Caco-2 (cell line): ENCODE measurements at regions of chr3 and their contacts with region 1.

Region 1: DNA sequence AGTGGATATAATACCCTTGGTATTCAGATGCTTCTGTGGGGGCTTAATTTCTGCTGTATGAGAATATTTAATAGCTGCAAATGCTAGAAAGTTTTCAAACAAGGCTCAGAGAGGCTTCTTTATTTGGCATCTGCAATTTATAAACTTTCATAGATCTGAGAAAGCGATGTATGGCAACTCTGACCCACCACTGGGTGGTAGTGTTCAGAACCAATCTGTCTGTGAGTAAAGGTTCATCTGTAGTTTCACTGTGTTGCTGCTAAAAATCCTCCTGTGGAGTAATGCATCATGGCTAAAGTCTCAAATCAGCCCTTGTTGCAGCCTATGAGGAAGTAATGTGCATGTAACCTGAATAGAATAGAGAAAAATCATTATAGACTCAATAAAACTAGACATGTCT is 47.4 kb downstream of the CLSTN2 start:
- DNase-seq: peak in 1 of 2 experiments; percentile 32
- H3K4me3 ChIP-seq: no peak overlapping the region
- H3K4me3 Mint-ChIP-seq: no peak overlapping the region
- H3K27ac Mint-ChIP-seq: no peak overlapping the region
- H3K4me1 ChIP-seq: no peaks in the 10 kb centered on the region
- H3K4me1 Mint-ChIP-seq: no peaks in the 10 kb centered on the region
- H3K27me3 ChIP-seq: no peaks in the 10 kb centered on the region
- H3K27me3 Mint-ChIP-seq: peaks cover 5% of the 10 kb centered on the region
- CTCF ChIP-seq: peak; percentile 29 to 65

Region 2: GRCh38 chr3:140051019-140051957 is 68.9 kb after region 1 on chr3:
- CTCF ChIA-PET with region 1: interaction called, 3 read pairs
- POLR2A ChIA-PET with region 1: no interaction called
- intact Hi-C with region 1: loop called (anchors 1 kb)
- DNase-seq: peak in 1 of 2 experiments; percentile 34
- H3K4me3 ChIP-seq: no peak overlapping the region
- H3K4me3 Mint-ChIP-seq: no peak overlapping the region
- H3K27ac Mint-ChIP-seq: peak overlapping the region; percentile 50
- H3K4me1 ChIP-seq: peaks cover 41% of the 10 kb centered on the region
- H3K4me1 Mint-ChIP-seq: peaks cover 34% of the 10 kb centered on the region
- H3K27me3 ChIP-seq: no peaks in the 10 kb centered on the region
- H3K27me3 Mint-ChIP-seq: no peaks in the 10 kb centered on the region
- CTCF ChIP-seq: peak in 1 of 2 experiments; percentile 54

Region 3: GRCh38 chr3:140078940-140079339 is 96.5 kb after region 1 on chr3:
- CTCF ChIA-PET with region 1: no interaction called
- POLR2A ChIA-PET with region 1: no interaction called
- intact Hi-C with region 1: no loop called
- DNase-seq: no peak
- H3K4me3 ChIP-seq: no peak overlapping the region
- H3K4me3 Mint-ChIP-seq: no peak overlapping the region
- H3K27ac Mint-ChIP-seq: no peak overlapping the region
- H3K4me1 ChIP-seq: no peaks in the 10 kb centered on the region
- H3K4me1 Mint-ChIP-seq: no peaks in the 10 kb centered on the region
- H3K27me3 ChIP-seq: no peaks in the 10 kb centered on the region
- H3K27me3 Mint-ChIP-seq: no peaks in the 10 kb centered on the region
- CTCF ChIP-seq: no peak

Region 4: GRCh38 chr3:140186421-140186920 is 204.1 kb after region 1 on chr3:
- CTCF ChIA-PET with region 1: no interaction called
- POLR2A ChIA-PET with region 1: no interaction called
- intact Hi-C with region 1: no loop called
- DNase-seq: no peak
- H3K4me3 ChIP-seq: no peak overlapping the region
- H3K4me3 Mint-ChIP-seq: no peak overlapping the region
- H3K27ac Mint-ChIP-seq: no peak overlapping the region
- H3K4me1 ChIP-seq: no peaks in the 10 kb centered on the region
- H3K4me1 Mint-ChIP-seq: no peaks in the 10 kb centered on the region
- H3K27me3 ChIP-seq: no peaks in the 10 kb centered on the region
- H3K27me3 Mint-ChIP-seq: no peaks in the 10 kb centered on the region
- CTCF ChIP-seq: no peak

Region 5: DNA sequence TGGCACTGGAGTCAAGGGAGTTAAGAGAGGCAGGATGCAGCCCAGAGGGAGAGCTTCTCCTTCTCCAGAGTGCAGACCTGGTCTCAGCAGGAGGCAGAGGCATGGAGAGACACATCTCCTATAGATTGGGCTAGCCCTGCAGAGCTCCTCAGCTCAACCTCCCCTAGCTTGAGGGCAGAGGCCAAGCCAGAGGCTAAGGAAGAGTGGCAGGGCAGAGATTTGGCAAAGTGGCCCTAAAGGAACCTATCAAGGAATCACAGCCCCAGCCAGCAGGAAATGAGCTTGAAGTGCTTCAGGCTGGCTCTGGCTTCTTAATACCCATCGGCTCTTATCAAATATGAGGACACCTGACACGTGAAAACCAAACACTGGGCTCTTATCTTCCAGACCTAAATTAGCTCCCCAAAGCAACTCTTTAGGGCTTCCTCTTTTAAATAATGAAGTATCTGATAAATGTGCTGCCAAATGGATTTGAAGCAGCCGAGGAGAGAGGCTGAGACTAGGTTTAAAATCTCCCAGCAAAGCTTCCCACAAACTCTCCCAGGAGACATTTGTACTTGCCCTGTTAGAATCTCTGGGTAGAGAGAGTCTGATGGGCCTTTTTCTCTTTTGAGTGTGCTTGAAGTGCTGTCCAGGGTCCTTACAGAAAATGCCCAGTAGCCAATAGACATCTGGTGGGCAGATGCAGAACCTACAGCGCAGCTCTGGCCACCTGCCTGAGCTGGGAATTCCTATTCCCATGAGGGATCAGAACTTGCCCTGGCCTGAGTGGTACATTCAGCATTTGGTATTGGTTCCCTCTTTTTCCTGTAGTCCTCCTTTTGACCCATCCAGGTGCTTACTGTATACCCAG is 224.0 kb after region 1 on chr3:
- CTCF ChIA-PET with region 1: no interaction called
- POLR2A ChIA-PET with region 1: no interaction called
- intact Hi-C with region 1: loop called (anchors 10 kb)
- DNase-seq: peak; percentile 40 to 59
- H3K4me3 ChIP-seq: no peak overlapping the region
- H3K4me3 Mint-ChIP-seq: no peak overlapping the region
- H3K27ac Mint-ChIP-seq: no peak overlapping the region
- H3K4me1 ChIP-seq: no peaks in the 10 kb centered on the region
- H3K4me1 Mint-ChIP-seq: no peaks in the 10 kb centered on the region
- H3K27me3 ChIP-seq: no peaks in the 10 kb centered on the region
- H3K27me3 Mint-ChIP-seq: peaks cover 3% of the 10 kb centered on the region
- CTCF ChIP-seq: peak in 1 of 2 experiments; percentile 59